ENCODE measurements at regions of chr1 and their contacts with region 1.

Region 1: GRCh38 chr1:119367427-119368124 is 1.0 kb upstream of the HAO2 start:
- DNase-seq: no peak
- H3K4me3 ChIP-seq: no peak overlapping the region
- H3K27ac ChIP-seq: no peak overlapping the region
- H3K4me1 ChIP-seq: no peaks in the 10 kb centered on the region
- H3K27me3 ChIP-seq: no peaks in the 10 kb centered on the region
- CTCF ChIP-seq: peak; percentile 80 to 92 (median 91)
- EP300 ChIP-seq: no peak
- POLR2A ChIP-seq: no peak

Region 2: GRCh38 chr1:118151312-118151937 is 1216.2 kb before region 1 on chr1:
- intact Hi-C with region 1: loop called (anchors 5 kb)
- DNase-seq: no peak
- H3K4me3 ChIP-seq: no peak overlapping the region
- H3K27ac ChIP-seq: no peak overlapping the region
- H3K4me1 ChIP-seq: no peaks in the 10 kb centered on the region
- H3K27me3 ChIP-seq: no peaks in the 10 kb centered on the region
- CTCF ChIP-seq: peak in 3 of 4 experiments; percentile 34 to 54 (median 48)
- EP300 ChIP-seq: no peak
- POLR2A ChIP-seq: no peak

Region 3: GRCh38 chr1:119275145-119276134 is 92.1 kb before region 1 on chr1:
- intact Hi-C with region 1: loop called (anchors 1 kb)
- DNase-seq: no peak
- H3K4me3 ChIP-seq: no peak overlapping the region
- H3K27ac ChIP-seq: no peak overlapping the region
- H3K4me1 ChIP-seq: peaks cover 0 to 19% (median 15%) of the 10 kb centered on the region in 4 donors
- H3K27me3 ChIP-seq: no peaks in the 10 kb centered on the region
- CTCF ChIP-seq: peak; percentile 21 to 75 (median 52)
- EP300 ChIP-seq: no peak
- POLR2A ChIP-seq: no peak

Region 4: GRCh38 chr1:119286587-119287181 is 80.9 kb before region 1 on chr1:
- intact Hi-C with region 1: loop called (anchors 1 kb)
- DNase-seq: no peak
- H3K4me3 ChIP-seq: no peak overlapping the region
- H3K27ac ChIP-seq: no peak overlapping the region
- H3K4me1 ChIP-seq: no peaks in the 10 kb centered on the region
- H3K27me3 ChIP-seq: no peaks in the 10 kb centered on the region
- CTCF ChIP-seq: peak in 2 of 4 experiments; percentile 48 to 55
- EP300 ChIP-seq: no peak
- POLR2A ChIP-seq: no peak

Measured in sigmoid colon (tissue), 7 donors.